ENCODE measurements at regions of chr3 and their contacts with region 1.

Region 1: DNA sequence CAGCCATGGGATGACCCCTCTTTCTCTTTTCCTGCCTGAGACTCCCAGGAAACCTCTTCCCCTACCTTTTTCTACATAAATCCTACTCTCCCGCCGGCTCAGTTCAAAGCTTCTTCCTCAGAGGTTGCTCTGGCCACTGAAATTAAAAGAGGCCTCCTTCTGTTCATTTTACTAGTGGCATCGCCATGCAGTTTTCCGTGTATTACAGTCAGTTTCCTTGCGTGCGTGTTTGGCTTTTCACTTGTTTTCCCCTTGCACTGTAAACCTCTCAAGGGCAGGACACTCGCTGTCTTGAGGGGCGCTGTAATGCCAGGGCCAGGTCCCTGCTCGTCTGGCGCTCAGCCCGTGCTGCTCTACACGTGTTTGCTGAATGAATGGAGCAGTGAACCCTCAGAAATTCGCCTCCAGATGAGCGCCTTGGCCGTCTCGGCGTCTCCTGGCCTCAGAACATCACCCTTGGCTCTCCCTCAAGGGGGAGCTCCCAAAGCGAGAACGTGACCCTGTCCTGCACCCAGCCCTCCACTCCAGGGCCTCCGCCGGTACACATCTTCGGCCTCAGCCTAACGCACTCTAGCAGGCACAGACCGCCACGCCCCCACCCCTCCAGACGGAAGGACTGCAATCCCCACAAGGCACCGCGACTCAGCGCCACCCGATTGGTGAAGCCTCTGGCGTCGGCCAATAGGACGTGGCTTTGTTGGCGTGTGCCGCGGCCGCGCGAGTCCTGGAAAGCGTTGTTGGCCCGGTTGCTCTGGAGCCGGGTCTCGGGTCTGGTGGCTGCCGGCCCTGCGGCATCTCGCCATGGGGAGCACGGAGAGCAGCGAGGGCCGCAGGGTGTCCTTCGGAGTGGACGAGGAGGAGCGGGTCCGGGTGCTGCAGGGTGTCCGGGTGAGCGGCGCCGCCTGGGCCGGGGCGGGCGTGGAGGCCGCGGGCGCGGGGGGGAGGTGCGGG is at the start of gene CHCHD6:
- DNase-seq: peak; percentile 94
- H3K4me3 ChIP-seq: peak within 1 kb of the TSS; percentile 51 to 79
- H3K27ac ChIP-seq: peak within 1 kb of the TSS in 1 of 2 donors; percentile 29
- H3K4me1 ChIP-seq: peaks cover 0 to 4% of the 10 kb centered on the region in 2 donors
- H3K27me3 ChIP-seq: no peaks in the 10 kb centered on the region
- CTCF ChIP-seq: peak in 1 of 4 experiments; percentile 9
- POLR2A ChIP-seq: no peak
- total RNA-seq, gene CHCHD6: 6.4 to 14.2 (median 10.3) TPM in 3 of 4 donors, not detected in the other

Region 2: GRCh38 chr3:126982471-126983175 is 278.8 kb after region 1 on chr3 and contains the start of gene PLXNA1:
- intact Hi-C with region 1: loop called (anchors 5 kb)
- DNase-seq: peak; percentile 70 to 79
- H3K4me3 ChIP-seq: peak within 1 kb of the TSS; percentile 59 to 86
- H3K27ac ChIP-seq: peak within 1 kb of the TSS; percentile 61 to 80
- H3K4me1 ChIP-seq: peaks cover 0 to 6% of the 10 kb centered on the region in 2 donors
- H3K27me3 ChIP-seq: no peaks in the 10 kb centered on the region
- CTCF ChIP-seq: peak; percentile 70 to 86 (median 82)
- POLR2A ChIP-seq: peak in 1 of 2 donors; percentile 38
- total RNA-seq, gene PLXNA1: 6.7 to 38.2 (median 16.9) TPM

Region 3: DNA sequence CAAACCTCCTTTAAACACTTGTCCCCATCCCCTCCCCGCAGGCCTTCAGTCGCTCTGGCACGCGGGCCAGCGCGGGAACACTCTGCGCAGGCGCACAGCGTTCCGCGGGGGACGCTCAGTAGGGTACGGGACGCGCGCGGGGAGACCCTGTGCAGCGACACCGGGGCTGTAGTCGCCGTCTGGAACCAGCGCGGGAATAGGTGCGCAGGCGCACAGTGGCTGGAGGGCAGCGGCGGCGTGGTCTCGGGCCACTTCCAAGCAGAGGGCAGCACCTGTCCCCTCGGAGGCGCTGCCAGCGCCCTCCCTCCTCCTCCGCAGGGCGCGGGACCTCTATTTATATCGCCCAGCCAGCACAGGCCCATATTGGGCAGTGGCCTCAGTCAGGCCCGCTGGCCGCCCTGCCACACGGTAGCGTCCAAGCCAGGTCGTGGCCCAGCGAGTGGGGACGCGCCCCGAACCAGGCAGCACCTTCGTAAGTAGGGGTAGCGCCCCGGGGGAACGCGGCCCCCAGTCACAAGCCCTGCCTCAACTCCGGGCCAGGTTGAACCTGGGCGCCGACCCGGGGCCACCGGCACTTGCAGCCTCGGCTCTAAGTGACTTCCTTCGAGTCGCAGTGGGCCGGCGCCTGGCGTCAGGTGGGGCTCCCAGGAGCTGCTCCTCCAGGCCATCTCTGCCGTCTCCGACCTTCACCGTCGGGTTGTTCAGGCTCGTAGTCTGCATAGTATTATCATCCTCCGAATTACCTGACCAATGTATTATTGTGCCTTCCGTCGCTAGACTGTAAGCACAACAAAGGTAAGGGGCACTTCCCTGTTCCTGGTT is 1211.5 kb after region 1 on chr3 and contains the start of gene KBTBD12:
- intact Hi-C with region 1: no loop called
- DNase-seq: peak in 1 of 2 donors; percentile 43
- H3K4me3 ChIP-seq: peak within 1 kb of the TSS; percentile 35 to 39
- H3K27ac ChIP-seq: peak within 1 kb of the TSS; percentile 6 to 65
- H3K4me1 ChIP-seq: no peaks in the 10 kb centered on the region
- H3K27me3 ChIP-seq: no peaks in the 10 kb centered on the region
- CTCF ChIP-seq: no peak
- POLR2A ChIP-seq: no peak
- total RNA-seq, gene KBTBD12: 0.59 to 2.8 (median 2.1) TPM in 3 of 4 donors, not detected in the other